Activated CD4-positive, alpha-beta memory T cell treated with anti-CD3 and anti-CD28 coated beads for 36 hours (primary cell): ENCODE measurements at regions of chr5 and their contacts with region 1.

Region 1: GRCh38 chr5:172984243-172984953 is 827 bp downstream of the ATP6V0E1 start:
- DNase-seq: peak; percentile 89
- H3K4me3 Mint-ChIP-seq: peak overlapping the region; percentile 94
- H3K27ac Mint-ChIP-seq: peak overlapping the region; percentile 98
- H3K4me1 Mint-ChIP-seq: peaks cover 30% of the 10 kb centered on the region
- H3K27me3 Mint-ChIP-seq: no peaks in the 10 kb centered on the region

Region 2: GRCh38 chr5:172707285-172708182 is 276.9 kb before region 1 on chr5:
- CTCF ChIA-PET with region 1: no interaction called
- POLR2A ChIA-PET with region 1: no interaction called
- intact Hi-C with region 1: no loop called
- DNase-seq: peak; percentile 36
- H3K4me3 Mint-ChIP-seq: no peak overlapping the region
- H3K27ac Mint-ChIP-seq: no peak overlapping the region
- H3K4me1 Mint-ChIP-seq: no peaks in the 10 kb centered on the region
- H3K27me3 Mint-ChIP-seq: peaks cover 33% of the 10 kb centered on the region

Region 3: GRCh38 chr5:172958331-172959046 is 25.9 kb before region 1 on chr5:
- CTCF ChIA-PET with region 1: interaction called, 17 read pairs
- POLR2A ChIA-PET with region 1: interaction called, 4 read pairs
- intact Hi-C with region 1: loop called (anchors 1 kb)
- DNase-seq: peak; percentile 71
- H3K4me3 Mint-ChIP-seq: peak overlapping the region; percentile 98
- H3K27ac Mint-ChIP-seq: peak overlapping the region; percentile 83
- H3K4me1 Mint-ChIP-seq: peaks cover 18% of the 10 kb centered on the region
- H3K27me3 Mint-ChIP-seq: no peaks in the 10 kb centered on the region

Region 4: DNA sequence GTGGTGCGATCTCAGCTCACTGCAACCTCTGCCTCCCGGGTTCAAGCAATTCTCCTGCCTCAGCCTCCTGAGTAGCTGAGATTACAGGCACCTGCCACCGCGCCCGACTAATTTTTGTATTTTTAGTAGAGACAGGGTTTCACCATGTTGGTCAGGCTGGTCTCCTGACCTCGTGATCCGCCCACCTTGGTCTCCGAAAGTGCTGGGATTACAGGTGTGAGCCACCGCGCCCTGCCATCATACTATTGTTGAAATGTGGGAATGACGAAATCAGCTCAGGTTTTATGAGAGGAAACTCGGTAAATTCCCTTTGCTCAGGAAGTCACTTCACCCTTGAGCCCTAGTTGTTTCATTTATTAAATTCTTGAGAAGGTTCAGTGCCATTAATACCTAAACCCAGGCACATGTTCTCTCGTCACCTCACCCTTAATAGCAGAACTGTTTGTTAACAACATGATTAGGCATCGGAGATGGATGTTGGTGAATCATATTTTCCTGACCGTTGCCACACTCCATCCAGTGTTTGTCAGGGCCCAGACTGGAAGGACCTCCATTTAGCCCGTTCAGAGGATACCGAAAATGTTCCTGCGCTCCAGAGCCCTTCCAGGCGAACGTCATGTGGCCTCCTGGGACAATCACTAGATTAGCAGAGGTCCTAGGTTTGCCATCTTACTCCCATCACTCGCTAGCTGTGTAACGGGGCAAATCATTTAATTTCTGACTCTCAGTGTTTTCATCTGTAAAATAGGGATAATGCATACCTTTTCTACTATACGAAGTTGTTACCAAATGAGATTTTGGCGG is 51.7 kb after region 1 on chr5:
- CTCF ChIA-PET with region 1: interaction called, 25 read pairs
- POLR2A ChIA-PET with region 1: interaction called, 24 read pairs
- intact Hi-C with region 1: loop called (anchors 1 kb)
- DNase-seq: peak; percentile 89
- H3K4me3 Mint-ChIP-seq: peak overlapping the region; percentile 78
- H3K27ac Mint-ChIP-seq: peak overlapping the region; percentile 98
- H3K4me1 Mint-ChIP-seq: peaks cover 64% of the 10 kb centered on the region
- H3K27me3 Mint-ChIP-seq: no peaks in the 10 kb centered on the region

Region 5: GRCh38 chr5:173065155-173065554 is 80.8 kb after region 1 on chr5:
- CTCF ChIA-PET with region 1: interaction called, 8 read pairs
- POLR2A ChIA-PET with region 1: interaction called, 8 read pairs
- intact Hi-C with region 1: loop called (anchors 2 kb)
- DNase-seq: no peak
- H3K4me3 Mint-ChIP-seq: peak overlapping the region; percentile 61
- H3K27ac Mint-ChIP-seq: peak overlapping the region; percentile 85
- H3K4me1 Mint-ChIP-seq: peaks cover 69% of the 10 kb centered on the region
- H3K27me3 Mint-ChIP-seq: no peaks in the 10 kb centered on the region

Region 6: DNA sequence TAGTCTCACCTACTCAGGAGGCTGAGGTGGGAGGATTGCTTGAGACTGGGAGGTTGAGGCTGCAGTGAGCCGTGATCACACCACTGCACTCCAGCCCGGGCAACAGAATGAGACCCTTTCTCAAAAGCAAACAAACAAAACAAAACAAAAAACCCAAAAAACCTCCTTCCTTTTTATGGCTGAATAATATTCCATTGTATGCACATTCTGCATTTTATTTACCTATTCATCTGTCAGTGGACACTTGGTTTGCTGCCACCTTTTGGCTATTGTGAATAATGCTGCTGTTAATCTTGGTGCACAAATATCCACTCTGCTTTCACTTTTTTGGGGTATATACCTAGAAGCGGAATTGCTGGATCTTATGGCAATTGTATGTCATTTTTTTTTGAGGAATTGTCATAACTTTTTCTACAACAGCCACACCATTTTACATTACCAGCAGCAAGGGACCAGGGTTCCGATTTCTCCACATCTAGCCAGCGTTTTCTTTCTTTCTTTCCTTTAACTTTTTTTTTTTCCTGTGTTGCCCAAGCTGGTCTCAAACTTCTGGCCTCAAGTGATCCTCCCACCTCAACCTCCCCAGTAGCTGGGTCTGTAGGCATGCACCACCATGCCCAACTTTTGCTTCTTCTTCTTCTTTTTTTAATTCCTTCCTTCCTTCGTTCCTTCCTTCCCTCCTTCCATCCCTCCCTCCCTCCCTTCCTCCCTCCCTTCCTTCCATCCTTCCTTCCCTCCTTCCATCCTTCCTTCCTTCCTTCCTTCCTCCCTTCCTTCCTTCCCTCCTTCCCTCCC is 220.0 kb after region 1 on chr5:
- CTCF ChIA-PET with region 1: interaction called, 6 read pairs
- POLR2A ChIA-PET with region 1: interaction called, 3 read pairs
- intact Hi-C with region 1: loop called (anchors 1 kb)
- DNase-seq: no peak
- H3K4me3 Mint-ChIP-seq: no peak overlapping the region
- H3K27ac Mint-ChIP-seq: no peak overlapping the region
- H3K4me1 Mint-ChIP-seq: no peaks in the 10 kb centered on the region
- H3K27me3 Mint-ChIP-seq: peaks cover 28% of the 10 kb centered on the region

Region 7: GRCh38 chr5:173331956-173332479 is 347.6 kb after region 1 on chr5:
- CTCF ChIA-PET with region 1: interaction called, 6 read pairs
- POLR2A ChIA-PET with region 1: interaction called, 3 read pairs
- intact Hi-C with region 1: loop called (anchors 2 kb)
- DNase-seq: peak; percentile 91
- H3K4me3 Mint-ChIP-seq: no peak overlapping the region
- H3K27ac Mint-ChIP-seq: no peak overlapping the region
- H3K4me1 Mint-ChIP-seq: peaks cover 22% of the 10 kb centered on the region
- H3K27me3 Mint-ChIP-seq: peaks cover 39% of the 10 kb centered on the region